Dendritic cell treated with granulocyte-macrophage colony-stimulating factor and Interleukin-4, amounts not matched to agents 40 ng/mL and 50 ng/mL, for 4 days (primary cell): ENCODE measurements at regions of chr3 and their contacts with region 1.

Region 1: GRCh38 chr3:66971891-66972551 is 26.1 kb upstream of the KBTBD8 start:
- H3K4me3 Mint-ChIP-seq: peak overlapping the region; percentile 61
- H3K27ac Mint-ChIP-seq: no peak overlapping the region
- H3K4me1 Mint-ChIP-seq: peaks cover 6% of the 10 kb centered on the region
- H3K27me3 Mint-ChIP-seq: peaks cover 6% of the 10 kb centered on the region

Region 2: DNA sequence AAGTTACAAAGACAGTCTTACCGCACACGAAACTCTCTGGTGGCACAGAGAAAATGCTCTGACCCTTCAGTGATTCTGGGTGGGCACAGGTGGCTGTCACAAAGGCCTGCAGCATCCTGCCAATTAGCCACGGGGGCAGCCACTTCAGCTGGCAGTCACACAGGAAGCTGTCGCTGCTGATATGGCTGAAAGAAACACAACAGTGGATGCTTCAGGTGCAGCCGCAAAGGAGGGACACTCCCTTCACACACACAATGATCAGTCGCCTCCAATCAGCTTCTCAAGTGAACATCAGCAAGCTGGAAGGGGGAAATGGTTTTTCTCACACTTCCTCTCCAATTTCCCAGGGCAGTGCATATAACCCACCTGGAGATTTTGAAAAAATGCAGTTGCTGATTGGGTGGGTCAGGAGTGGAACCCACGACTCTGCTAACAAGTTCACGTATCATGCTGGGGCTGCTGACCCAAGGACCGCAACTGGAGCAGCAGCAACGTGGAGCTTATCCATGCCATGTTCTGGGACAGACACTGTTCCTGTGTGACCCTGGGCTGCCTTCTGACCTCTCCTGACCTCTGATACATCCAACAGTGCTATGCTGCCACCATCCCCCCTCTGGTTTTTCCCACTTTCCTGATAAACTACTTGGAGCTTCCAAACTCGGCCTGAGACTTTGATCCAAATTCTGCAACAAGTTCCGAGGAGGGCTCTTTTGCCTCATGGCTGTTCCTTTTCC is 577.8 kb before region 1 on chr3:
- intact Hi-C with region 1: no loop called
- H3K4me3 Mint-ChIP-seq: no peak overlapping the region
- H3K27ac Mint-ChIP-seq: no peak overlapping the region
- H3K4me1 Mint-ChIP-seq: peaks cover 12% of the 10 kb centered on the region
- H3K27me3 Mint-ChIP-seq: no peaks in the 10 kb centered on the region

Region 3: GRCh38 chr3:67037615-67038014 is 65.6 kb after region 1 on chr3:
- intact Hi-C with region 1: loop called (anchors 1 kb)
- H3K4me3 Mint-ChIP-seq: no peak overlapping the region
- H3K27ac Mint-ChIP-seq: no peak overlapping the region
- H3K4me1 Mint-ChIP-seq: no peaks in the 10 kb centered on the region
- H3K27me3 Mint-ChIP-seq: no peaks in the 10 kb centered on the region

Region 4: GRCh38 chr3:67357610-67358458 is 385.8 kb after region 1 on chr3:
- intact Hi-C with region 1: loop called (anchors 10 kb)
- H3K4me3 Mint-ChIP-seq: no peak overlapping the region
- H3K27ac Mint-ChIP-seq: no peak overlapping the region
- H3K4me1 Mint-ChIP-seq: no peaks in the 10 kb centered on the region
- H3K27me3 Mint-ChIP-seq: no peaks in the 10 kb centered on the region